Pancreas (tissue), 10 donors: ENCODE measurements at regions of chr1 and their contacts with region 1.

Region 1: DNA sequence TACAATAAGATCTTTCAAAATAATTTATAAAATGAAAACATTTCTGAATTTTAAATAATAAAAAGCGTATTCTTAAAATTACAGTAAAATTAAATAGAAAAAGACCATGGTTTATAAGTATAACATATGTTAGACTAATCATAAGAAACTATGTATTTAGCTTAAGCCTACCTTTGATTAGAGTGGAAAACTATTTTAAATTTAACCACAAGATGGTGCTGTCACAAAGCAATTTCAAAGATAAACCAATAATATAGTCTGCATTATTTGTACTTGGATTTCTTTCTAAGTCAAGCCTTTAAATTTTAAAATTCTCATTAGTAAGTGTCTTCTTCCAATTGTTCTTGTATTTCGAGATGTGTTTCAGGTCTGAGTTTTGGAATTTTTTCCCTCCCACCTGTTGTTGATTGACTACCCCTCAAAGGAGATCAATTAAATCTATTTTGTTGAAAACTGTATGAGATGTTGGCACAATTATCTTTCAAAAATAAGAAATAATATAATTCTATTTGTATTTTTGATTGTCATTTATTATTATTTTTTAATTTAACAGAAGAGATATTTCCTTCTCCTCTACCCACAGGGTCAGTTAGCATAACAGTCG is 459.8 kb downstream of the KCNT2 start:
- DNase-seq: no peak
- ATAC-seq: peak in 2 of 4 donors; percentile 48 to 56
- H3K4me3 ChIP-seq: no peak overlapping the region
- H3K27ac ChIP-seq: no peak overlapping the region
- H3K4me1 ChIP-seq: peaks cover 0 to 5% (median 5%) of the 10 kb centered on the region in 3 donors
- H3K27me3 ChIP-seq: no peaks in the 10 kb centered on the region
- CTCF ChIP-seq: peak; percentile 26 to 49 (median 42)

Region 2: DNA sequence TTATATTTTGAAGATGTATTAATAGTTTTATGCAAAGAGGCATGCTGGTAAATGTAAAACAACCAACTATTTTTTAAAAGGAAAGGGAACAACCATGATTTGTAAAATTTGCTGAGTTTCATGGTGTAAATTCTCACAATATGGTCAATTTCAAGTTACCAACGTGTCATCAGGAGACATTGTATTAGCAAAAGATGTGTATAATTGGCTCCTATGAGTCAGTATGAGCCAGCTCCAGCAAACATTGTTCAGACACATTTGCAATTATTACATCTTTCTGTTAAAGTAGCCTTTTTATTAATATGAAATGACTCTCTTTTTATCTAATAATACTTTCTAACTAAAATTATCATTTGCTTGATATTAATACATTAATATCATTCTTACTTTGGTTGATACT is 518.7 kb after region 1 on chr1:
- intact Hi-C with region 1: loop called in 2 of 3 experiments (anchors 5 to 10 kb)
- DNase-seq: no peak
- ATAC-seq: no peak
- H3K4me3 ChIP-seq: no peak overlapping the region
- H3K27ac ChIP-seq: no peak overlapping the region
- H3K4me1 ChIP-seq: no peaks in the 10 kb centered on the region
- H3K27me3 ChIP-seq: peaks cover 0 to 10% (median 0%) of the 10 kb centered on the region in 4 donors
- CTCF ChIP-seq: no peak